PC-3 (cell line): ENCODE measurements at regions of chr12 and their contacts with region 1.

Region 1: GRCh38 chr12:95959107-95959506 is 16.0 kb downstream of the AMDHD1 start:
- DNase-seq: peak; percentile 49
- ATAC-seq: peak; percentile 92
- H3K4me3 ChIP-seq: no peak overlapping the region
- H3K27ac ChIP-seq: no peak overlapping the region
- H3K4me1 ChIP-seq: no peaks in the 10 kb centered on the region
- H3K27me3 ChIP-seq: no peaks in the 10 kb centered on the region
- CTCF ChIP-seq: peak; percentile 50

Region 2: DNA sequence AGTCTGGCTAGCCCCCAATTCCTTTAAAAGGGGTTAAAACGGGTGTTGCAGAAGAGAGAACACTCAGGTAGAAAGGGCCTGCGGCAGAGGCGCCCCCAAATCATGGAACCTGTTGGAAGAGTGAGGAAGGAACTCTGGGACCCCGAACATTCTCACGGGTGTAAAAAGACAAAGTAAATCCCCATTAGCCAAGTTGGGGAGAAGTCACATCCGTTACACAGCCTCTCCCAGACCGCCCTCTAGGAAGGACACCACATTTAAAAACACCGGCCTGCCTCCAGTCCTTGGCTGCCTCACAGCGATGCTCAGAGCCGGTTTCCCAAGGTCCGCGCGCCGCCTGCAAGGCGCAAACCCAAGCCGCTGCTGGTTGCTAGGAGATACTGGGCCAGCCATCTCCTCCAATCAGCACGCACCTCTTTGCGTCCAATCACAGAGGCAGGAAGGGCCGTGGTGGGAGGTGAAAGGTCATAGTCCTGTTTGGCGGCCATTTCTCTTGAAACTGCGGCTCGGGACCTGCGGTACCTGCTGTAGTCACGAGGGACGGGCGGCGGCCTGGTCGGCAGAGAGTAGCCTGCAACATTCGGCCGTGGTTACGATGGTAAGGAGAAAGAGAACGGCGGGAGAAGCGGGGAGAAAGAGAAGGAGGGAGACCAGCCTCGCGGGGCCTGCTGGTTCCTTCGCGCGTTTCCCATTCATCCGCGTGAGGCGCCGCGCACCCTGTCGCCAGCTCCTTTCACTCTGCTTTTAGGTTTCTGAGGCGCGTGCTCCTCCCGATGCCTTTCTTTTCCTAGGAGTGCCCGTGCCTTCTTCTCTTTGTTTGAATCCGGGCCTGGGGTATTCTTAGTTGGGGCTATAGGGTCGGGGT is 100.4 kb before region 1 on chr12 and contains the start of gene SNRPF:
- CTCF ChIA-PET with region 1: no interaction called
- POLR2A ChIA-PET with region 1: no interaction called
- intact Hi-C with region 1: loop called (anchors 1 kb)
- DNase-seq: peak; percentile 99
- ATAC-seq: peak; percentile 92
- H3K4me3 ChIP-seq: peak within 1 kb of the TSS; percentile 90
- H3K27ac ChIP-seq: peak within 1 kb of the TSS; percentile 63
- H3K4me1 ChIP-seq: peaks cover 18% of the 10 kb centered on the region
- H3K27me3 ChIP-seq: no peaks in the 10 kb centered on the region
- CTCF ChIP-seq: no peak; the same call in 1 of the 2 replicates
- total RNA-seq, gene SNRPF: 47.4 and 47.5 TPM in 2 replicates

Region 3: GRCh38 chr12:95887311-95887710 is 71.8 kb before region 1 on chr12:
- CTCF ChIA-PET with region 1: no interaction called
- POLR2A ChIA-PET with region 1: no interaction called
- intact Hi-C with region 1: no loop called
- DNase-seq: no peak
- ATAC-seq: no peak
- H3K4me3 ChIP-seq: no peak overlapping the region
- H3K27ac ChIP-seq: no peak overlapping the region
- H3K4me1 ChIP-seq: no peaks in the 10 kb centered on the region
- H3K27me3 ChIP-seq: no peaks in the 10 kb centered on the region
- CTCF ChIP-seq: no peak

Region 4: DNA sequence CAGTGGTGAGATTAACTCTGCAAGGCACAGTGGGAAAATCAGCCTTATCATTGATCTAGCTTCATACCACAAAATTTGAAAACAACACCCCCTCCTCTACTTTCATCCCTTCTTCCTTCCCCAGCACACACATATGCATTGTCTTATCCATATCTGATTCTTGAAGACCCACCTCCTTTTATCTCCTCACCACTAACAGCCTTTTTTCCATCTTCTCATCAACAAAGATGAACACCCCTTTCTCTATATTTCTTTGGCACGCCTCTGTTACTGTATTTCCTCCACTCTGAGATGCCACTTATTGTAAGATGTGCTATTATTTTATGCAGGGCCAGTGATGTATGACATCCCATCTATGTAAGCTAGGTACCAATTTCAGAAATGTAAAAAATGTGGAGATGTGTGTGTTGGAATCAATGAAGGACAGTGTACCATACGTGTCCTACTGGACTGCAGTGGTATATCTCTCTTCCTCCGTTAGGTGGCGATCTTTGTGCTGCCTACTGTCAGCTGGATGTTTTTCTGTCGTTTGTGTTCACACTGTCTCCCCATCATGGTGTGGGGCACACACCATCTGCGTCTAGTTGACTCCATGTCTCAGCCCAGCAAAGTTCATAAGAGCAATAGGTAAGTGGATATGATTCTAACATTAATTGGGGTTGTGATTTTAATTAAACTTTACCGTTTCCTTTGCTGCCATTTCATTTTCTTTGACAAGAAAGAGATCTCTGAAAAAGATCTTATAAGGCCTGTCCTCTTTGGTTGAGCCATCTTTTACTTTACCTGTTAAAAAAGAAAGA is 40.7 kb before region 1 on chr12:
- CTCF ChIA-PET with region 1: interaction called, 11 read pairs
- POLR2A ChIA-PET with region 1: interaction called, 4 read pairs
- intact Hi-C with region 1: loop called (anchors 1 kb)
- DNase-seq: peak; percentile 70
- ATAC-seq: peak; percentile 97
- H3K4me3 ChIP-seq: no peak overlapping the region
- H3K27ac ChIP-seq: no peak overlapping the region
- H3K4me1 ChIP-seq: no peaks in the 10 kb centered on the region
- H3K27me3 ChIP-seq: peaks cover 15% of the 10 kb centered on the region
- CTCF ChIP-seq: peak; percentile 93

Region 5: GRCh38 chr12:95970905-95971304 is 11.8 kb after region 1 on chr12:
- CTCF ChIA-PET with region 1: no interaction called
- POLR2A ChIA-PET with region 1: interaction called, 13 read pairs
- intact Hi-C with region 1: no loop called
- DNase-seq: no peak
- ATAC-seq: no peak
- H3K4me3 ChIP-seq: no peak overlapping the region
- H3K27ac ChIP-seq: no peak overlapping the region
- H3K4me1 ChIP-seq: no peaks in the 10 kb centered on the region
- H3K27me3 ChIP-seq: no peaks in the 10 kb centered on the region
- CTCF ChIP-seq: no peak

Region 6: GRCh38 chr12:97097734-97098133 is 1138.6 kb after region 1 on chr12:
- CTCF ChIA-PET with region 1: no interaction called
- POLR2A ChIA-PET with region 1: no interaction called
- intact Hi-C with region 1: no loop called
- DNase-seq: no peak
- ATAC-seq: no peak
- H3K4me3 ChIP-seq: no peak overlapping the region
- H3K27ac ChIP-seq: no peak overlapping the region
- H3K4me1 ChIP-seq: no peaks in the 10 kb centered on the region
- H3K27me3 ChIP-seq: peaks cover 42% of the 10 kb centered on the region
- CTCF ChIP-seq: no peak